PC-3 (cell line): ENCODE measurements at regions of chr14 and their contacts with region 1.

Region 1: DNA sequence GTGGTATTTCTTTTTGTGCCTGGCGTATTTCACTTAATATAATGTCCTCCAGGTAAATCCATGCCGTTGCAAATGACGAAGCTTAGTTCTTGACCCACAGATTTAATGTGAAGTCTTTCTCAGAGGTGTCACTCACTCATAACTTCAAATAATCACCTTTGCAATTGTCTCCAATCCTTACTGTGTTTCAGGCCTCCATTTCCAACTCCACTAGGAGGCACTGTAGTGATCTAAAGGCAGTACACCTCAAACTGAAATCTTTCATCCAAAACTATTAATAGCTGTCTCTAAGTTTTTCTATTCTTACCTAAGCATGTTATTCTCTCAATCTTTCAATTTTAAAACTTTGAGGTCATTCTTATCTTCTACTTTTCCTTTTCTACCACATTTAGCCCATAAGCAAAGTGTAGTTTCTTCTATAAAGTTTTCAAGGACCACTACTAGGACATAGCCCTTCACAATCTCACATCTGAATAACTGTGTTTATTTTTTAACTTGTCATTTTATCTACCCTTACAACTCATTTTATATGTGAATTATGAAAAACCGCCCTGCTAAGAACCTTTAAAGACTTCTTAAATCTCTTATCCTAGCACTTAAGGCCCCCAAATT is 25.5 kb upstream of the FBXO34 start:
- DNase-seq: peak; percentile 76
- ATAC-seq: peak; percentile 84
- H3K4me3 ChIP-seq: no peak overlapping the region
- H3K27ac ChIP-seq: no peak overlapping the region
- H3K4me1 ChIP-seq: no peaks in the 10 kb centered on the region
- H3K27me3 ChIP-seq: 0 out of 2 replicates have a peak, but pooled peaks cover 3% of the 10 kb centered on the region
- CTCF ChIP-seq: peak; percentile 98

Region 2: DNA sequence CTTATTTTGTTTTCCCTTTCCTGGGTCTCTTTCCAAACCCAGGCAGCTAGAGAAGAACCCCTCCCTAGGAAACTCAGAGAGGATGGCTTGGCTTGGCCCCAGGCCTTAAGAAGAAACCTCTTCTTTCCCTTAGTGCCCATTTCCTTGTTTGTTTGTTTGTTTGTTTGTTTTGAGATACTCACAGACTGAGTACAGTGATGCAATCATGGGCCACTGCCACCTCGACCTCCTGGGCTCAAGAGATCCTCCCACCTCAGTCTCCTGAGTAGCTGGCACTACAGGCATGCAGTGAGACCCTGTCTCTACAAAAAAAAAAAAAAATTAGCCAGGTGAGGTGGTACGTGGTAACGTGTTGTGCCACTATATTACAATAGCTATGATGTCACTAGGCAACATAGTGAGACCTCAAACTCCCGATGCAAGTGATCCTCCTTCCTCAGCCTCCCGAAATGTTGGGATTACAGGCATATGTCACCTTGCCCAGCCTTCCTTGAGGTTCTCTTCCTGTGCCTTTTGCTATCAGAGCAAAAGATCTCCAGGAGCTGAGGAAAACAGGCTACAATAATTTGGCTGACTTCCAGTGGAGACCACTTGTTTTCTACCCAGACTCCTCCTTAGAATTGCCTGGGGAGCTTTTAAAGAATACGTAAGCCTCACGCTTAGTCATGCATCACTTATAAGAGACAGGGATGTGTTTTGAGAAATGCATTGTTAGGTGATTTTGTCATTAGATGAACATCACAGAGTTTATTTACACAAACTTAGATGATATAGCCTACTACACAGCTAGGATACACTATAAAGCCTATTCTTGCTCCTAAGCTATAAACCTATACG is 151.2 kb before region 1 on chr14:
- CTCF ChIA-PET with region 1: no interaction called
- POLR2A ChIA-PET with region 1: no interaction called
- intact Hi-C with region 1: no loop called
- DNase-seq: peak; percentile 93
- ATAC-seq: peak; percentile 79
- H3K4me3 ChIP-seq: no peak overlapping the region
- H3K27ac ChIP-seq: peak overlapping the region; percentile 39
- H3K4me1 ChIP-seq: peaks cover 26% of the 10 kb centered on the region
- H3K27me3 ChIP-seq: no peaks in the 10 kb centered on the region
- CTCF ChIP-seq: no peak

Region 3: DNA sequence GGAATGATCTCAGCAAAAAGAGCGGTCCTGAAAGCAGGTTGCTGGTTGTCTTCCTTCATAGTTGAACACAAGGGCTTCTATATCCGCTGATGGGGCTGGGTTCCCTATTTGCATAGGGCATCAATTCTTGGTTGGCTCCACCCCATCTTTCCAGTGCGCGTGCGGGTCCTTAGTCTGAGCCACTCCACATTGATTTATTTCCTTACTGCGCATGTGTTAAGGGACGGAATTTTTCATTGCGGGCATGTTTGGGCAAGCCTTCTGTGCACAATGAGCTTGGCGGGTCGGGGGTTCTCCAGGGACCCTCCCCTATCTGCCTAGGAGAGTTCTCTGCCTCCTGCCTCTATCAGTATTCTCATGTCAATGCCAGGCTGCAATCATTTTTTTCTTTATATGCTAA is 33.1 kb before region 1 on chr14:
- CTCF ChIA-PET with region 1: interaction called, 3 read pairs
- POLR2A ChIA-PET with region 1: no interaction called
- intact Hi-C with region 1: loop called (anchors 1 kb)
- DNase-seq: no peak
- ATAC-seq: peak; percentile 12; the same call in 1 of the 2 replicates
- H3K4me3 ChIP-seq: no peak overlapping the region
- H3K27ac ChIP-seq: no peak overlapping the region
- H3K4me1 ChIP-seq: no peaks in the 10 kb centered on the region
- H3K27me3 ChIP-seq: 0 out of 2 replicates have a peak, but pooled peaks cover under 1% of the 10 kb centered on the region
- CTCF ChIP-seq: no peak

Region 4: DNA sequence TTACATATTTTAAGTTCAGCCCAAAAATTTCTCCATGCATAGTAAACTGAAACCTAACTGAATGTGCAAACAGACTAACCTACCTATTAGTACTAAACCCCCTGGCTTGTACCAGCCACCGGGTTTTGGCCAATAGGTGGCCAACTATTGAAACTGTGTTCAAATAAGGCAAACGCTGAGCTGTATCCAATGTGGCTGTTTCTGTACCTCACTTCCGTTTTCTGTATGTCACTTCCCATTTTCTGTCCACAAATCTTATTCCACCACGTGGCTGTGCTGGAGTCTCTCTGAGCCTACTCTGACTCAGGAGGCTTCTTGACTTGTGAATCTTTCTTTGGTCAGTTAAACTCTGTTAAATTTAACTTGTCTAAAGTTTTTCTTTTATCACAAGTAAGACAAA is 19.4 kb after region 1 on chr14:
- CTCF ChIA-PET with region 1: interaction called, 10 read pairs
- POLR2A ChIA-PET with region 1: no interaction called
- intact Hi-C with region 1: no loop called
- DNase-seq: no peak
- ATAC-seq: no peak
- H3K4me3 ChIP-seq: no peak overlapping the region
- H3K27ac ChIP-seq: no peak overlapping the region
- H3K4me1 ChIP-seq: peaks cover under 1% of the 10 kb centered on the region; the same call in 1 of the 2 replicates
- H3K27me3 ChIP-seq: no peaks in the 10 kb centered on the region
- CTCF ChIP-seq: no peak; the same call in 1 of the 2 replicates

Region 5: GRCh38 chr14:55562135-55562534 is 316.4 kb after region 1 on chr14:
- CTCF ChIA-PET with region 1: no interaction called
- POLR2A ChIA-PET with region 1: no interaction called
- intact Hi-C with region 1: no loop called
- DNase-seq: no peak
- ATAC-seq: no peak
- H3K4me3 ChIP-seq: no peak overlapping the region
- H3K27ac ChIP-seq: no peak overlapping the region
- H3K4me1 ChIP-seq: peaks cover 4% of the 10 kb centered on the region
- H3K27me3 ChIP-seq: no peaks in the 10 kb centered on the region
- CTCF ChIP-seq: no peak